ENCODE measurements at regions of chr5 and their contacts with region 1.

Region 1: GRCh38 chr5:62779010-62779422 is 200.4 kb downstream of the LRRC70 start:
- DNase-seq: peak; percentile 64
- ATAC-seq: peak; percentile 95
- H3K4me3 ChIP-seq: no peak overlapping the region
- H3K27ac ChIP-seq: no peak overlapping the region
- H3K4me1 ChIP-seq: no peaks in the 10 kb centered on the region
- H3K27me3 ChIP-seq: no peaks in the 10 kb centered on the region
- CTCF ChIP-seq: peak; percentile 78
- EP300 ChIP-seq: no peak
- POLR2A ChIP-seq: no peak
- RAD21 ChIP-seq: peak; percentile 46; the same call in 1 of the 2 replicates

Region 2: DNA sequence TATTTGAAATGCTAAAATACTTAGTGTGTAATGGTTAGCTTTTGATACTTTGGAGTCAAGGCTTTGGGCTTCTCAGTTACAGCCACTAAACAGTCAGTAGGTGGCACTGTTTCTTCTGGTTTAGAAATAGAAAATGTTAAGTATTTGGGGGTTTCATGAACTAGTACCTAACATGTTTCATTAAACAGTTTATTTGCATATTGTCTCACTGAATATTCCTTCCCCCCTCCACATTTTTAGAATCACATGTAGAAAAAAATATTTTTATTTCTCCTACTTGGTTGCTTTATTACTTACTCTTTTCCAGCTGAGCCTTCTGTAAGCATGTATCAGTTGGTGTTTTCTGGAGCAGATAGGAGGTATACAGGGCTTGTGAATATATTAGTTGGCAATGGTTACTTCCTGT is 318.4 kb before region 1 on chr5:
- CTCF ChIA-PET with region 1: interaction called, 28 read pairs
- POLR2A ChIA-PET with region 1: no interaction called
- in situ Hi-C with region 1: loop called (anchors 5 kb)
- intact Hi-C with region 1: loop called (anchors 1 kb)
- DNase-seq: peak; percentile 35
- ATAC-seq: peak; percentile 76
- H3K4me3 ChIP-seq: no peak overlapping the region
- H3K27ac ChIP-seq: no peak overlapping the region
- H3K4me1 ChIP-seq: no peaks in the 10 kb centered on the region
- H3K27me3 ChIP-seq: no peaks in the 10 kb centered on the region
- CTCF ChIP-seq: peak; percentile 70
- EP300 ChIP-seq: no peak
- POLR2A ChIP-seq: no peak
- RAD21 ChIP-seq: no peak

Region 3: GRCh38 chr5:62538017-62538942 is 240.7 kb before region 1 on chr5:
- CTCF ChIA-PET with region 1: no interaction called
- POLR2A ChIA-PET with region 1: no interaction called
- in situ Hi-C with region 1: no loop called
- intact Hi-C with region 1: loop called (anchors 10 kb)
- DNase-seq: peak; percentile 28
- ATAC-seq: no peak
- H3K4me3 ChIP-seq: no peak overlapping the region
- H3K27ac ChIP-seq: no peak overlapping the region
- H3K4me1 ChIP-seq: no peaks in the 10 kb centered on the region
- H3K27me3 ChIP-seq: no peaks in the 10 kb centered on the region; a peak in 1 of 5 replicates
- CTCF ChIP-seq: no peak
- EP300 ChIP-seq: no peak
- POLR2A ChIP-seq: no peak
- RAD21 ChIP-seq: no peak

Region 4: DNA sequence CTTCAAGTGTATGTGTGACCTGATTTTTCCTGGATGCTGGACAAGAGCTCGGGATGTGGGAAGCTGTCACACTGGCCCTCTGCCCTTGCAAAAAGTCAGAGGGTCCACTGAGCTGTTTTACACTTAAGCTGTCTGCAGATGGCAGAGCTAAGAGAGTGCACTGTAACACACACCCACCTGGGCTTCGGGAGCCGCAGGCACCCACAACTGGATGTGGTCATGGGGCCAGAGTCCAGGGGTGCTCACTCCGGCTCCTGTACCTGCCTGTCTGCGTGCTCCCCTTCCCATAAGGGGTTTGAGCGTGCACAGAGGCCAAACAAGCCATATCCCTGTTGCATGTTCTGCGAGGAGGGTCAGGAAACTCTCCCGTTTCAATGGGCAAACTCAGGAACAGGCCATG is 117.9 kb before region 1 on chr5:
- CTCF ChIA-PET with region 1: no interaction called
- POLR2A ChIA-PET with region 1: no interaction called
- in situ Hi-C with region 1: loop called (anchors 10 kb)
- intact Hi-C with region 1: loop called (anchors 1 kb)
- DNase-seq: peak; percentile 47
- ATAC-seq: peak; percentile 100
- H3K4me3 ChIP-seq: peak overlapping the region; percentile 22 to 57 (median 23); a peak in 3 of 6 replicates
- H3K27ac ChIP-seq: no peak overlapping the region
- H3K4me1 ChIP-seq: peaks cover 16% of the 10 kb centered on the region; the same call in 1 of the 2 replicates
- H3K27me3 ChIP-seq: no peaks in the 10 kb centered on the region
- CTCF ChIP-seq: peak; percentile 63
- EP300 ChIP-seq: no peak
- POLR2A ChIP-seq: no peak
- RAD21 ChIP-seq: peak; percentile 49; the same call in 1 of the 2 replicates